ENCODE measurements at regions of chr1 and their contacts with region 1.

Region 1: GRCh38 chr1:31564134-31564989 is 12.0 kb upstream of the TINAGL1 start:
- DNase-seq: peak; percentile 52
- H3K4me3 ChIP-seq: no peak overlapping the region
- H3K27ac ChIP-seq: no peak overlapping the region
- H3K4me1 ChIP-seq: peaks cover 26% of the 10 kb centered on the region
- H3K27me3 ChIP-seq: no peaks in the 10 kb centered on the region
- CTCF ChIP-seq: peak; percentile 79 to 84

Region 2: GRCh38 chr1:31410871-31411270 is 153.5 kb before region 1 on chr1:
- CTCF ChIA-PET with region 1: no interaction called
- dilution Hi-C with region 1: no loop called
- in situ Hi-C with region 1: no loop called
- intact Hi-C with region 1: no loop called
- DNase-seq: no peak
- H3K4me3 ChIP-seq: no peak overlapping the region
- H3K27ac ChIP-seq: no peak overlapping the region
- H3K4me1 ChIP-seq: peaks cover 44% of the 10 kb centered on the region
- H3K27me3 ChIP-seq: no peaks in the 10 kb centered on the region
- CTCF ChIP-seq: no peak

Region 3: GRCh38 chr1:31576201-31576669 is 11.9 kb after region 1 on chr1 and contains the start of gene TINAGL1:
- CTCF ChIA-PET with region 1: no interaction called
- dilution Hi-C with region 1: no loop called
- in situ Hi-C with region 1: no loop called
- intact Hi-C with region 1: loop called (anchors 2 kb)
- DNase-seq: peak; percentile 96
- H3K4me3 ChIP-seq: peak within 1 kb of the TSS; percentile 71 to 90 (median 83)
- H3K27ac ChIP-seq: peak within 1 kb of the TSS; percentile 68
- H3K4me1 ChIP-seq: peaks cover 64% of the 10 kb centered on the region
- H3K27me3 ChIP-seq: no peaks in the 10 kb centered on the region
- CTCF ChIP-seq: no peak
- total RNA-seq, gene TINAGL1: 433 to 840 TPM

Region 4: DNA sequence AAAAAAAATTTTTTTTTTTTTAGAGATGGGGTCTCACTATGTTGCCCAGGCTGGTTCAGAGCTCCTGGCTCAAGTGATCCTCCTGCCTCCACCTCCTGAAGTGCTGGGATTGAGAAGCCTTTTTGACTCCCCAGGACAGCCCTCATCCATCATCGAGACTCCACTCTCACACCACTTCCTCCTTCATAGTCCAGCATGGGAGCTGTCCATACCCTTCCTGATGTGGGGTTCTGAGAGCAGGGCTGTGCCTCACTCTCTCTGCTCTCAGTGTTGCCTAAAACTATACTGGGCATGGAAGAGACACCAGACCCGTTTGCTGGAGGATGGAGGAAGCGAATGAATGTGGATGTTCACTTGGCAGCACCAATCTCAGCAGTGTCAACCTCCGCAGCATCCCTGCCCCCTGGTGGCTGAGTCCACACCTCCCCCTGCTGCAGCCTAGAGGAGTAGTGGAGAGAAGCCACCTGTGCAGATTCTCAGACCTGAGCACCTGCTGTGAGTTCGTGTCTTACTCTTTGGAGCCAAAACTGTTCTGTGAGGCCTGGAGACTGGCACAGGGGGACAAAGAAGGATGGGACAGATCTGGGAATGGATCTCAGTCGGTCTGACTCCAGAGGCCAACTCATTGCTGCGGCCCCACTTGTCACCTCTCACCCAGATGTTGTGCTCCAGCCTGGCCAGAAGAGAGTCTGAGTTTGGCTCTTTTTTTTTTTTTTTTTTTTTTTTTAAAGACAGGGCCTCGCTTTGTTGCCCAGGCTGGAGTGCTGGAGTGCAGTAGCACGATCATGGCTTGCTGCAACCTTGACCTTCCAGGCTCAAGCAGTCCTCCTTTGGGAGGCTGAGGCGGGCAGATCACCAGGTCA is 29.6 kb after region 1 on chr1:
- CTCF ChIA-PET with region 1: interaction called, 4 read pairs
- dilution Hi-C with region 1: no loop called
- in situ Hi-C with region 1: no loop called
- intact Hi-C with region 1: loop called (anchors 1 kb)
- DNase-seq: peak; percentile 73
- H3K4me3 ChIP-seq: no peak overlapping the region
- H3K27ac ChIP-seq: no peak overlapping the region
- H3K4me1 ChIP-seq: peaks cover 13% of the 10 kb centered on the region
- H3K27me3 ChIP-seq: no peaks in the 10 kb centered on the region
- CTCF ChIP-seq: peak; percentile 96 to 97

Region 5: GRCh38 chr1:31617917-31618660 is 53.7 kb after region 1 on chr1:
- CTCF ChIA-PET with region 1: interaction called, 3 read pairs
- dilution Hi-C with region 1: no loop called
- in situ Hi-C with region 1: no loop called
- intact Hi-C with region 1: loop called (anchors 1 kb)
- DNase-seq: no peak
- H3K4me3 ChIP-seq: peak overlapping the region; percentile 22 to 52 (median 45)
- H3K27ac ChIP-seq: no peak overlapping the region
- H3K4me1 ChIP-seq: peaks cover 19% of the 10 kb centered on the region
- H3K27me3 ChIP-seq: no peaks in the 10 kb centered on the region
- CTCF ChIP-seq: peak; percentile 32 to 85

Region 6: GRCh38 chr1:31633053-31633452 is 68.7 kb after region 1 on chr1:
- CTCF ChIA-PET with region 1: no interaction called
- dilution Hi-C with region 1: loop called (anchors 10 kb)
- in situ Hi-C with region 1: loop called in 1 of 2 experiments (anchors 5 kb)
- intact Hi-C with region 1: loop called (anchors 1 kb)
- DNase-seq: no peak
- H3K4me3 ChIP-seq: no peak overlapping the region
- H3K27ac ChIP-seq: no peak overlapping the region
- H3K4me1 ChIP-seq: peaks cover 14% of the 10 kb centered on the region
- H3K27me3 ChIP-seq: no peaks in the 10 kb centered on the region
- CTCF ChIP-seq: peak; percentile 67 to 75

Region 7: DNA sequence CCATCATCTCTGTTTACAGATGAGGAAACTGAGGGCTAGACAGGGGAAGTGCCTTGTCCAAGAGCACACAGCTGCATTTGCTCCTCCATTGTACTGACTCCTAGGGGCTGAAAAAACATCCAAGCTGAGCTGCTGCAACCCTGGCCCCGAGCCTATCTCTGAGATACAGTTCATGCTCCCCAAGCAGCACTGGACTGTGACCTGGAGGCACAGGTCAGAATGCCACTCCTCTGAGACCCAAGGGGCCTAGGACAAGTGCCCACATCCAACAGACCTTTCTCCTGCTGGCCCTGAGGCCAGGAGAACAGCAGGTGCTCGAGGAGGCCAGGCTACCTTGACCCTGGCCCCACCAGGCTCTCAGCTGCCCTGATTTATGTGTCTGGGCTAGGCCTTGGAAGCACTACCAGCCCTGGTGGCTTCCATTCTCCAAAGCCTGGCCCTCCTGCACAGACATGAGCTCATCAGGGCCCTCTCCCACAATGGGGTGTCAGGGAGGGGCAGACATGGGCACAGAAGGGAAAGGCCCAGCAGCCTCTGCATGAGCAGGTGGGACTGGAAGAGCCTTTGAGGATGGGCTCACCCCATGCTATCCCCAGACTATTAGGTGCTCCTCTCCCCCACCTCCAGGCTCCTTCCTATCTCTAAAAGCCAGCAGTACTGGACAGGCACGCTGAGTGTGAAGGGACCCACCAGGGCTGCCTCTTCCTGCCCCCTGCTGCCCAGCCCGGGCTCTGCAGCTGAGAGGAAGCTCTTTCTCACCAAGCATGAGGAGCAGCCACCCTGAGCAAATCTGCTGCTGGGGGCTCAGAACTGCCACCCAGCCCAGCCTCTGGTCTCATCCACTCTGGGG is 181.0 kb after region 1 on chr1:
- CTCF ChIA-PET with region 1: no interaction called
- dilution Hi-C with region 1: no loop called
- in situ Hi-C with region 1: no loop called
- intact Hi-C with region 1: loop called (anchors 1 kb)
- DNase-seq: peak; percentile 49
- H3K4me3 ChIP-seq: no peak overlapping the region
- H3K27ac ChIP-seq: no peak overlapping the region
- H3K4me1 ChIP-seq: no peaks in the 10 kb centered on the region
- H3K27me3 ChIP-seq: no peaks in the 10 kb centered on the region
- CTCF ChIP-seq: peak; percentile 82 to 93

Measured in mammary epithelial cell (primary cell).